Natural killer cell (primary cell): ENCODE measurements at regions of chr1 and their contacts with region 1.

Region 1: GRCh38 chr1:157490467-157491165 is 61.7 kb downstream of the FCRL5 start:
- DNase-seq: peak; percentile 45 to 71
- ATAC-seq: peak; percentile 31 to 61 (median 49)
- H3K4me3 ChIP-seq: no peak overlapping the region
- H3K4me3 Mint-ChIP-seq: no peak overlapping the region
- H3K27ac ChIP-seq: no peak overlapping the region
- H3K27ac Mint-ChIP-seq: no peak overlapping the region
- H3K4me1 ChIP-seq: peaks cover 20% of the 10 kb centered on the region
- H3K4me1 Mint-ChIP-seq: peaks cover 38 to 43% of the 10 kb centered on the region in 2 donors
- H3K27me3 ChIP-seq: no peaks in the 10 kb centered on the region
- H3K27me3 Mint-ChIP-seq: peaks cover 9 to 22% of the 10 kb centered on the region in 2 donors
- CTCF ChIP-seq: peak; percentile 72

Region 2: GRCh38 chr1:157025856-157026255 is 464.8 kb before region 1 on chr1:
- intact Hi-C with region 1: no loop called
- DNase-seq: no peak
- ATAC-seq: no peak
- H3K4me3 ChIP-seq: no peak overlapping the region
- H3K4me3 Mint-ChIP-seq: no peak overlapping the region
- H3K27ac ChIP-seq: no peak overlapping the region
- H3K27ac Mint-ChIP-seq: no peak overlapping the region
- H3K4me1 ChIP-seq: no peaks in the 10 kb centered on the region
- H3K4me1 Mint-ChIP-seq: no peaks in the 10 kb centered on the region
- H3K27me3 ChIP-seq: peaks cover 2% of the 10 kb centered on the region
- H3K27me3 Mint-ChIP-seq: peaks cover 17 to 51% of the 10 kb centered on the region in 2 donors
- CTCF ChIP-seq: no peak

Region 3: DNA sequence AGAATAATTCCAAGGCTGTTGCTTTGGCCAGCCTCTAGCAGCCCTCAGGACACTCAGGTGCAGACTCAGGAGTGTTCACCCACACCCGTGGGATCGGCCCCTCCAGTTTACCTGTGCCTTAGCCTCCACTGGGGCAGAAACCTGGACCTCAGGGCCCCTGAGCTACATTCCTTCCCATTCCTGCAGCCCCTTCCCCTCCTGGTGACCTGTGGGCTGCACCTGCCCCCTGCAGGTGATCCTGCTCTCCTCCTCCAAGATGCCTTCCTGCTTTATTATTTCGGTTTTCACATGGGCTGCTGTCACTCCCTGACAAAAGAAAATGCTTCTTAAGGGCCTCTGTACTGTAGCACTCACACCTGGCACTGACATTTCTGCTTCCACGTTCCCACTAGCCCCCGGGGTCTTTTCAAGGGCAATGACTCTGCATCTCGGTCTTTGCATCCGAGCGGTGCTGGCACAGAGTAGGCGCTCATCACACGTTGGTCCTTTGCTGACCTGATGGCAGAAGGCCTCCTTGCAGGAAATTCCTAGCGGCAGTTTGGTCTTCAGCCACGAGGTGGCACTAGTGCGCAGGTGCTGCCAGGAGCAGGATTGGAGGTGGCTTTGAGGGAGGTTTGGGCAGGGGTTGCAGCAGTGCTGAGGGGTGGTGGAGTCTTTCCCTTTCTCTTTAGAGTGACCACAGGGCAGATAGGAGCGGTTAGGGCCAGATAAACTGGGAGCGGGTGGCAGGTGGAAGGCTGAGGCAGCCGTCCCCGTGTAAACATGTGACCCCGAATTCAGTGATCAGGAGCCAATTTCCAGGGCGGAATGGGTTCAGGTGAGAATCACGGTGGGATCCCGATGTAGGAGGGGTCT is 327.1 kb before region 1 on chr1:
- intact Hi-C with region 1: loop called (anchors 2 kb)
- DNase-seq: peak; percentile 66 to 80
- ATAC-seq: peak; percentile 54 to 81 (median 76)
- H3K4me3 ChIP-seq: no peak overlapping the region
- H3K4me3 Mint-ChIP-seq: no peak overlapping the region
- H3K27ac ChIP-seq: no peak overlapping the region
- H3K27ac Mint-ChIP-seq: no peak overlapping the region
- H3K4me1 ChIP-seq: no peaks in the 10 kb centered on the region
- H3K4me1 Mint-ChIP-seq: peaks cover 7% of the 10 kb centered on the region in 2 donors
- H3K27me3 ChIP-seq: peaks cover 3% of the 10 kb centered on the region
- H3K27me3 Mint-ChIP-seq: peaks cover 13 to 16% of the 10 kb centered on the region in 2 donors
- CTCF ChIP-seq: peak; percentile 80

Region 4: GRCh38 chr1:157193702-157194391 is 296.8 kb before region 1 on chr1:
- intact Hi-C with region 1: loop called (anchors 1 kb)
- DNase-seq: peak; percentile 49 to 51
- ATAC-seq: peak in 1 of 3 donors; percentile 41
- H3K4me3 ChIP-seq: no peak overlapping the region
- H3K4me3 Mint-ChIP-seq: no peak overlapping the region
- H3K27ac ChIP-seq: no peak overlapping the region
- H3K27ac Mint-ChIP-seq: no peak overlapping the region
- H3K4me1 ChIP-seq: no peaks in the 10 kb centered on the region
- H3K4me1 Mint-ChIP-seq: peaks cover 5 to 13% of the 10 kb centered on the region in 2 donors
- H3K27me3 ChIP-seq: no peaks in the 10 kb centered on the region
- H3K27me3 Mint-ChIP-seq: peaks cover 35 to 48% of the 10 kb centered on the region in 2 donors
- CTCF ChIP-seq: peak; percentile 71

Region 5: GRCh38 chr1:157369808-157370521 is 120.7 kb before region 1 on chr1:
- intact Hi-C with region 1: loop called (anchors 1 kb)
- DNase-seq: peak in 1 of 2 donors; percentile 64
- ATAC-seq: peak; percentile 83 to 89 (median 88)
- H3K4me3 ChIP-seq: no peak overlapping the region
- H3K4me3 Mint-ChIP-seq: no peak overlapping the region
- H3K27ac ChIP-seq: no peak overlapping the region
- H3K27ac Mint-ChIP-seq: no peak overlapping the region
- H3K4me1 ChIP-seq: no peaks in the 10 kb centered on the region
- H3K4me1 Mint-ChIP-seq: no peaks in the 10 kb centered on the region
- H3K27me3 ChIP-seq: no peaks in the 10 kb centered on the region
- H3K27me3 Mint-ChIP-seq: peaks cover 0 to 8% of the 10 kb centered on the region in 2 donors
- CTCF ChIP-seq: peak; percentile 94